ENCODE measurements at regions of chr10 and their contacts with region 1.

Region 1: GRCh38 chr10:46284293-46285229 is 2.2 kb upstream of the ANTXRL start:
- DNase-seq: peak; percentile 24 to 91
- H3K4me3 ChIP-seq: peak overlapping the region; percentile 72 to 84
- H3K27ac ChIP-seq: peak overlapping the region; percentile 78 to 88
- H3K4me1 ChIP-seq: peaks cover 0 to 8% of the 10 kb centered on the region in 2 donors
- H3K27me3 ChIP-seq: no peaks in the 10 kb centered on the region
- CTCF ChIP-seq: no peak

Region 2: DNA sequence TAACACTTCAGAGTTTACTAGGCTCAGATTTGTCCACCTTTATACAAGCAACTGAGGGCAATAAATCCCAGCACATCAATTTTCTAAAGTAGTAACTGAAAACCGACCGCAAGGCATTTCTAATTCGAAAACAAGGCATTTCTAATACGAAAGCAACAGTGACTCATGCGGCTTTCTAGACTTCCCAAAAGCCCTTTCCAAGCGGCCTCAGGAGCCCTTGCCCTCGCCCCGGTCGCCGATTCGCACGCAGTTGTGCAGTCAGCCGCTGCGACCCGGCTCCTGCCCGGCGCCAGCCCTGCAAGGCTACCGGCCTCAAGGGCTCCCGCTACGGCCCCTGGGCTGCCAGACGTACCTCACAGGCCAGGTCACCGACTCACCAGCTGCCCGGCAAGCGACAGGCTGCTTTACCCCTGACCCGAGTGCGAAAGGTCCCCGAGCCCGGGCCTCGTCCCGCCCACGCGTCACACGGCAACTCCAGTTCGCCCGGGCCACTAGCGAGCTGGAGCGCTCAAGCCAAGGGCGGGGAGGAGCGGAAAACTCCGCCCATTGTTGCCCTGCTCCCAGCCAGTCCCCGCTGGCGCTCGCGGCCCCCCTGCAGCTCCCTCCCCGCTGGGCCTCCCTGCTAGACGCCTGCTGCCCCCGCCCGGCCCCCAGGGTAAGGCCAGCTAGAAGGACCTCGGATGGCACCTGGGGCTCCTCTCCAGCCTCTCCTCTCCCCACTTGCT is 261.4 kb before region 1 on chr10:
- intact Hi-C with region 1: loop called (anchors 10 kb)
- DNase-seq: peak; percentile 71 to 95
- H3K4me3 ChIP-seq: peak overlapping the region; percentile 63 to 67
- H3K27ac ChIP-seq: peak overlapping the region; percentile 80 to 82
- H3K4me1 ChIP-seq: peaks cover 3 to 27% of the 10 kb centered on the region in 2 donors
- H3K27me3 ChIP-seq: no peaks in the 10 kb centered on the region
- CTCF ChIP-seq: peak in 2 of 3 experiments; percentile 36 to 40

Region 3: GRCh38 chr10:46106410-46107255 is 177.9 kb before region 1 on chr10:
- intact Hi-C with region 1: no loop called
- DNase-seq: peak in 1 of 2 donors; percentile 75
- H3K4me3 ChIP-seq: peak overlapping the region; percentile 63 to 71
- H3K27ac ChIP-seq: no peak overlapping the region
- H3K4me1 ChIP-seq: peaks cover 0 to 8% of the 10 kb centered on the region in 2 donors
- H3K27me3 ChIP-seq: no peaks in the 10 kb centered on the region
- CTCF ChIP-seq: peak in 1 of 3 experiments; percentile 8

Region 4: DNA sequence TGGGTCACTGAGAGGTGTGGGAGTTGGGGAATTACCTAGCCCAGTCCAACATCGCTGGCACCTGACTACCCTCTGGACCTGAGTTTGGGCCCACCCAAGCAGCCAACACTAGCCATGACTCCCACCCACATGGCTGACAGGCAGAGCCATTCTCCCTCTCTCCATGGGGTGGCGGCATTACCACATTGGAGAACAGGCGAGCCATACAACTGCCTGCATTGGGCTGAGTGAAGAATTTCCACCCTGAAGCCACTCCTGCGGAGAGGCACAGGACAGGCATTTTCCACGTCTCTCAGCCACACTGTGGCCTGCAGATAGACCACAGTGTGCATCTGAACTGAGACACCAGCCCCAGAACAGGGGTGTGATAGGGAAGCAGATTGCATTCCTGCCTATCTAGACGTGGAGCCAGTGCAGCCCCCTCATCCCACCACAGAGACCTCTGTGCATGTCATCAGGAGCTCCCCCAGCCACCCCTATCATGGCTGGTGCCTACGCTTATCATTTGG is 55.9 kb before region 1 on chr10:
- intact Hi-C with region 1: loop called (anchors 2 kb)
- DNase-seq: peak in 1 of 2 donors; percentile 81
- H3K4me3 ChIP-seq: no peak overlapping the region
- H3K27ac ChIP-seq: no peak overlapping the region
- H3K4me1 ChIP-seq: no peaks in the 10 kb centered on the region
- H3K27me3 ChIP-seq: no peaks in the 10 kb centered on the region
- CTCF ChIP-seq: peak; percentile 84 to 94 (median 93)

Region 5: DNA sequence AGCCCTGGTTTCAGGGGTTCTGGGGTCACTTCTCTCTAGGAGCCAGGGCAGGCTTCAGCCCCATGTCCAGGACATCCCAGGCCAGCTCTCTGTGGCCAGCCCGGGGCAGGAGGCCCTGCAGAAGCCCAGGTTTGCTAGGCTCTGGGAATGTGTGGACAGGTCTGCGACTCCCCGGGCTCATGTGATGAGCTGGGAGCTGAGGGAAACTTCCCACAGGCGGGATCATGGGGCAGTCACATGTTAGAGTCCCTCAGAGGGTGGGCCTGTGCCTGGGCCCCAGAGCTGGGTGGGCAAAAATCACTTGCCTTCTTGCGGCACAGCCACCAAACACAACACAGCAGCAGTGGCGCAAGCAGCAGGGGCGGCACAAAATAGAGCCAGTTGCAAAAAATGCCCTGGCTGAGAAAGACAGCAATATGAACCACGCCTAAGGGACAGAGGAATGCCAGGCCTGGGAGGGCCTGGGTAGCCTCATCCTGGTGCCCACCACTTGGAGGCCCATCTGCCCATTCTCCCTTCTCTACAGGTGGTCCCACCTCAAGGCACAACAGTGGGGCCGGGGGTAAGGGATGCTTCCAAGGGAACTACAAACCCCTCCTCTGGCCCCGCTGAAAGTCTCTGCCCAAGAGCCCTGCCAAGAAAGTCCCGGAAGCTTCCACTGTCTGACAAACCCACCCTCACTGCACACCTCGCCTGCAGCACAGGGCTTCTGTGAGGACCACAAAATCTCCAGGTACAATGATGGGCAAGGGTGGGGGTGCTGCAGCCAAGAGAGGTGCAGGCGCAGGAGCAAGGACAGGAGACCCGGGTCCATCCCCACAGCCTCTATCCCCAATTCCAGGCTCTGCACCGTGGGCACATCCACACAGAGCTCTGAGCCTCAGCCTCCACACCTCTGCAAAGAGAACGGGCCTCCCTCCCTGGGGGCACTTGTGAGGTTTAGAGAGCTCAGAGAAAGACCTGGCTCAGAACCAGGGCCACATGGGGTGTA is 32.4 kb before region 1 on chr10:
- intact Hi-C with region 1: loop called (anchors 2 kb)
- DNase-seq: peak in 1 of 2 donors; percentile 53
- H3K4me3 ChIP-seq: no peak overlapping the region
- H3K27ac ChIP-seq: no peak overlapping the region
- H3K4me1 ChIP-seq: peaks cover 7 to 19% of the 10 kb centered on the region in 2 donors
- H3K27me3 ChIP-seq: no peaks in the 10 kb centered on the region
- CTCF ChIP-seq: no peak

Region 6: GRCh38 chr10:47381427-47382379 is 1097.1 kb after region 1 on chr10:
- intact Hi-C with region 1: loop called (anchors 1 kb)
- DNase-seq: peak in 1 of 2 donors; percentile 44
- H3K4me3 ChIP-seq: no peak overlapping the region
- H3K27ac ChIP-seq: no peak overlapping the region
- H3K4me1 ChIP-seq: peaks cover 0 to 5% of the 10 kb centered on the region in 2 donors
- H3K27me3 ChIP-seq: no peaks in the 10 kb centered on the region
- CTCF ChIP-seq: no peak

Measured in ascending aorta (tissue), 2 donors.